Stomach (tissue), 19 donors: ENCODE measurements at regions of chr11 and their contacts with region 1.

Region 1: GRCh38 chr11:74459584-74459983 is 7.8 kb downstream of the KCNE3 start:
- DNase-seq: no peak
- H3K4me3 ChIP-seq: peak overlapping the region in 1 of 4 donors; percentile 6
- H3K27ac ChIP-seq: peak overlapping the region in 2 of 5 donors; percentile 14 to 78
- H3K4me1 ChIP-seq: peaks cover 0 to 62% (median 31%) of the 10 kb centered on the region in 4 donors
- H3K27me3 ChIP-seq: no peaks in the 10 kb centered on the region
- CTCF ChIP-seq: no peak
- EP300 ChIP-seq: no peak
- POLR2A ChIP-seq: no peak

Region 2: DNA sequence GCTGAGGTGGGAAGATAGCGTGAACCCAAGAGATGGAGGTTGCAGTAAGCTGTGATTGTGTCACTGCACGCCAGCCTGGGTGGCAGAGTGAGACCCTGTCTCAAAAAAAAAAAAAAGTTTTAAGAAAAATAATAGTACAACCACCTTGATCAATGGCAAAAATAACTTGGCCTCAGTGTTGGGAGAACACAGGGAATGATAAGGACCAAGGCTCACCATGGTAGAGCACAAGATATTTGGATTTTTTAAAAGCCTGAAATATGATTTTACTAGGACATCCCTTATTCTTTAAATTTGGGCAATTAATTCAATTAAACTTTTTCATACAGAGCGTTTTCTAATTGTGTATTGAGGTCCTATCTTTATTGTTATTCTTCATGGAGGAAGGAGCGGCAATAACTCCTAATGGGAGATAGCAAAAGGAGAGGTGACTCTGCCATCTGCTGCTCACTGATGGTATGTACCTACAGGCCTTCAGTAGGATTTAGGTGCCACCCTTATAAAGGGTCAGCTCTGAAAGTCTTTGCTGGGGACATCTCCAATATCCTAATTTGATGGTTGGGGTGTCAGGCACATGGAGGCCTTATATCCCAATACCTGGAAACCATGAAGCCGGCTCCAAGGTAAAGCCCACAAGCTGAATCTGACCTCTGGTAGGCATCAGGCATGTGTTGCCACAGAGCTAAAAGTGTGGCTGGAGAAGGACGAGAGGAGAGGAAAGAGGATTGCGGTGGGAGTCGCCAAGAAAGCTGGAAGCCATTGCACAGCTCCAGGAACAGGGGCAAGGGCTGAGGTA is 110.9 kb after region 1 on chr11:
- intact Hi-C with region 1: loop called (anchors 5 kb)
- DNase-seq: peak; percentile 56 to 82
- H3K4me3 ChIP-seq: no peak overlapping the region
- H3K27ac ChIP-seq: peak overlapping the region in 1 of 5 donors; percentile 28
- H3K4me1 ChIP-seq: peaks cover 0 to 11% (median 7%) of the 10 kb centered on the region in 4 donors
- H3K27me3 ChIP-seq: no peaks in the 10 kb centered on the region
- CTCF ChIP-seq: peak in 5 of 7 experiments; percentile 61 to 89 (median 65)
- EP300 ChIP-seq: no peak
- POLR2A ChIP-seq: no peak

Region 3: DNA sequence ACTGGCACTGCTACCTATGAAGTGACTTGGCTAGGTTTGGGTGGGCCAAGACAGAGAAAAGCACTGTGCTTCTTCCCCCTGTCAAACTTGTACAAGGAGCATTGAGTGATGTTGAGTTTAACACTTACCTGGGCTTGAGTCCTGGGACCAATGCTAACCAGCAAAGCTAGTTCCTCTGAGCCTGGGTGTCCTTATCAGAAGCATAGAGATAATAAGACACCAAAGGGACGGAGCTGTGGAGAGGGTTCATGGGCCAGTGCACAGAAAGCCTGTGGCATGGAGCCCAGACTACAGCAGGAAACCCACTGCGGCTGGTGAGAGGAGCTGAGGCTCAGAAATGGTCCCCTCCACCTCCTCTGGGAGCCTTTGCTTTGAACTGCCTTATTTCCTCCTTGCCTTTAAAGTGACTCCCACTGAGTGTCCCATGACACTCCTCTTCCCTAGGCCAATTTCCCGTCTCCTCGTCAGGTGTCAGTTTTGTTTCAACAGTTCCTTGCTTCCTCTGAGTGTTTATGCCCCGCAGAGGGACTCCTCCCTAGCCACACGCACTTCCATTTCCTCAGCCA is 700.7 kb after region 1 on chr11:
- intact Hi-C with region 1: no loop called
- DNase-seq: no peak
- H3K4me3 ChIP-seq: no peak overlapping the region
- H3K27ac ChIP-seq: peak overlapping the region; percentile 50 to 78 (median 68)
- H3K4me1 ChIP-seq: peaks cover 31 to 63% (median 32%) of the 10 kb centered on the region in 4 donors
- H3K27me3 ChIP-seq: no peaks in the 10 kb centered on the region
- CTCF ChIP-seq: no peak
- EP300 ChIP-seq: no peak
- POLR2A ChIP-seq: no peak